ENCODE measurements at regions of chr16 and their contacts with region 1.

Region 1: DNA sequence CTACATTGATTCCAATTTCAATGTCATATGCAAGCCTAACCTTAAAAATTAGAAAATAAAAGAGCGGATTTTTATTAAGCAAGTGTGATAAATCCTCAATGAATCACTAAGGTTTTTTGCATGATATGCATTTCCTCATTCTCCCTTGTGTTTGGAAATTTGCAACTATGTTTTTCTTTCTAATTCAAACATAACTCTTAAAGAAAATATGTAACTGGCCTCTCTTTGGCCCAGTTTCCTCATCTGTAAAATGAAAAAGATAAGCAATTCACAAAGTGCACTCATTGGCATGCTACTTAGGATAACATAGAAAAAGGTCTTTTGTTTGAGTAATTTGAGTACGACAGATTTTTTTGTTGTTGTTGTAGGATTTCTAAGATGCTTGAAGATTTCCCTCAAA is 295.5 kb downstream of the CDH11 start:
- DNase-seq: peak; percentile 52
- ATAC-seq: peak; percentile 64
- H3K4me3 ChIP-seq: no peak overlapping the region
- H3K27ac ChIP-seq: peak overlapping the region; percentile 44; the same call in 1 of the 2 replicates
- H3K4me1 ChIP-seq: 0 out of 2 replicates have a peak, but pooled peaks cover 2% of the 10 kb centered on the region
- H3K27me3 ChIP-seq: no peaks in the 10 kb centered on the region
- CTCF ChIP-seq: no peak
- POLR2A ChIP-seq: no peak
- RAD21 ChIP-seq: no peak

Region 2: GRCh38 chr16:64751906-64752305 is 74.5 kb before region 1 on chr16:
- CTCF ChIA-PET with region 1: no interaction called
- POLR2A ChIA-PET with region 1: no interaction called
- dilution Hi-C with region 1: no loop called
- in situ Hi-C with region 1: no loop called
- intact Hi-C with region 1: loop called (anchors 2 kb)
- DNase-seq: peak; percentile 90
- ATAC-seq: peak; percentile 88
- H3K4me3 ChIP-seq: no peak overlapping the region
- H3K27ac ChIP-seq: peak overlapping the region; percentile 89; the same call in 1 of the 2 replicates
- H3K4me1 ChIP-seq: peaks cover 7% of the 10 kb centered on the region
- H3K27me3 ChIP-seq: no peaks in the 10 kb centered on the region
- CTCF ChIP-seq: no peak
- POLR2A ChIP-seq: no peak
- RAD21 ChIP-seq: no peak

Region 3: GRCh38 chr16:64892835-64893785 is 66.7 kb after region 1 on chr16:
- CTCF ChIA-PET with region 1: no interaction called
- POLR2A ChIA-PET with region 1: no interaction called
- dilution Hi-C with region 1: no loop called
- in situ Hi-C with region 1: no loop called
- intact Hi-C with region 1: no loop called
- DNase-seq: peak; percentile 93
- ATAC-seq: peak; percentile 88
- H3K4me3 ChIP-seq: peak overlapping the region; percentile 9; the same call in 1 of the 2 replicates
- H3K27ac ChIP-seq: peak overlapping the region; percentile 51; the same call in 1 of the 2 replicates
- H3K4me1 ChIP-seq: peaks cover 10% of the 10 kb centered on the region
- H3K27me3 ChIP-seq: no peaks in the 10 kb centered on the region
- CTCF ChIP-seq: peak; percentile 10; the same call in 1 of the 2 replicates
- POLR2A ChIP-seq: no peak
- RAD21 ChIP-seq: no peak

Measured in IMR-90 (cell line).